IMR-90 (cell line): ENCODE measurements at regions of chr1 and their contacts with region 1.

Region 1: DNA sequence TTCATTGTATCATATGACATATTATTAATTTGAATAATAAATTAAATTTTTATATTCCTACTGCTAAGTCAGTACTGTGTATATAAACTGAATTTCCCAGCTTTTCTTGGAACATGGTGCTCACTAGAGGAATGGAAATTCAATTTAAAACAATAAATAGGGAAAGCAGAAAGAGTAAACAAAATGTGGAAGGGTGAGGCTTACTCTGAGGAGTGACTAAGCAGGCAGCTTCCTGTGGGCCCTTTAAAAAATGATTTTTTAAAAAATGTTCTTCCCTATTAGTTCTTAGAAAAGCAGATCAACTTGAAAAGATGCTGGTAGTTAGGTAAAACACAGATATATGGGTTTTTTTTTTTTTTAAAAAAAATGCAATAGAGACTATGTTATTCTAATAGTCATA is 49.5 kb upstream of the S1PR1 start:
- DNase-seq: peak; percentile 72
- ATAC-seq: peak; percentile 90
- H3K4me3 ChIP-seq: no peak overlapping the region
- H3K27ac ChIP-seq: peak overlapping the region; percentile 86
- H3K4me1 ChIP-seq: peaks cover 9% of the 10 kb centered on the region
- H3K27me3 ChIP-seq: no peaks in the 10 kb centered on the region
- CTCF ChIP-seq: no peak
- POLR2A ChIP-seq: no peak
- RAD21 ChIP-seq: no peak

Region 2: GRCh38 chr1:101200513-101200912 is 13.2 kb after region 1 on chr1:
- CTCF ChIA-PET with region 1: no interaction called
- POLR2A ChIA-PET with region 1: interaction called, 14 read pairs
- dilution Hi-C with region 1: no loop called
- in situ Hi-C with region 1: no loop called
- intact Hi-C with region 1: no loop called
- DNase-seq: peak; percentile 93
- ATAC-seq: peak; percentile 99
- H3K4me3 ChIP-seq: no peak overlapping the region
- H3K27ac ChIP-seq: peak overlapping the region; percentile 66
- H3K4me1 ChIP-seq: peaks cover 4% of the 10 kb centered on the region
- H3K27me3 ChIP-seq: no peaks in the 10 kb centered on the region
- CTCF ChIP-seq: 0 out of 2 replicates have a peak, but pooled peaks have one; percentile 5
- POLR2A ChIP-seq: no peak
- RAD21 ChIP-seq: no peak

Region 3: DNA sequence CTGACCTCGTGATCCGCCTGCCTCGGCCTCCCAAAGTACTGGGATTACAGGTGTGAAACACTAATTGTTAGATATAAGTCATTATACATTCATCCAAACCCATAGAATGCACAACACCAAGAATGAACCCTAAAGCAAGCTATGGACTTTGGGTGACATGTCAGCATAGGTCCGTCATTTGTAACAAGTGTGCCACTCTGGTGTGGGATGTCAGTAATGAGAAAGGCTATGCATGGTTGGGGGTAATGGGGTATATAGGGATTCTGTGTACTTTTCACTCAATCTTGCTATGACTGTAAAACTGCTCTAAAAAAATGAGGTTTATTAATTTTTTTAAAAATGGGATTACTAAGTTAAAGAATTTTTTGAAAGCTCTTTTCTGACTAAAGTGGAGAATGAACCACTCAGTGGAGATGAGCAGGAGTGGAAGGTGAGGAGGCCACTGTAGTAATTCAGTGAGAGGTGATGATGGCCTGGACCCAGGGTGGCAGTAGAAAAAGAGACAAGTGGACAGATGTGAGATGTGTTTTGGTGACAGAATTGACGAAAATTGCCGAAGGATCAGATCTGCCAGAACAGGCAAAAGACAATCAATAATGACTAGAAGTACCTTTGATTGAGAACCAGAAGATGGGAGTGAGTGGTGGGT is 28.2 kb after region 1 on chr1:
- CTCF ChIA-PET with region 1: no interaction called
- POLR2A ChIA-PET with region 1: no interaction called
- dilution Hi-C with region 1: no loop called
- in situ Hi-C with region 1: no loop called
- intact Hi-C with region 1: no loop called
- DNase-seq: no peak
- ATAC-seq: no peak
- H3K4me3 ChIP-seq: no peak overlapping the region
- H3K27ac ChIP-seq: no peak overlapping the region
- H3K4me1 ChIP-seq: no peaks in the 10 kb centered on the region
- H3K27me3 ChIP-seq: no peaks in the 10 kb centered on the region
- CTCF ChIP-seq: no peak
- POLR2A ChIP-seq: no peak
- RAD21 ChIP-seq: no peak

Region 4: GRCh38 chr1:101228424-101229134 is 41.3 kb after region 1 on chr1:
- CTCF ChIA-PET with region 1: no interaction called
- POLR2A ChIA-PET with region 1: no interaction called
- dilution Hi-C with region 1: no loop called
- in situ Hi-C with region 1: no loop called
- intact Hi-C with region 1: no loop called
- DNase-seq: no peak
- ATAC-seq: no peak
- H3K4me3 ChIP-seq: no peak overlapping the region
- H3K27ac ChIP-seq: no peak overlapping the region
- H3K4me1 ChIP-seq: no peaks in the 10 kb centered on the region
- H3K27me3 ChIP-seq: no peaks in the 10 kb centered on the region; the same call in 1 of the 2 replicates
- CTCF ChIP-seq: no peak
- POLR2A ChIP-seq: no peak
- RAD21 ChIP-seq: no peak